ENCODE measurements at regions of chr2 and their contacts with region 1.

Region 1: DNA sequence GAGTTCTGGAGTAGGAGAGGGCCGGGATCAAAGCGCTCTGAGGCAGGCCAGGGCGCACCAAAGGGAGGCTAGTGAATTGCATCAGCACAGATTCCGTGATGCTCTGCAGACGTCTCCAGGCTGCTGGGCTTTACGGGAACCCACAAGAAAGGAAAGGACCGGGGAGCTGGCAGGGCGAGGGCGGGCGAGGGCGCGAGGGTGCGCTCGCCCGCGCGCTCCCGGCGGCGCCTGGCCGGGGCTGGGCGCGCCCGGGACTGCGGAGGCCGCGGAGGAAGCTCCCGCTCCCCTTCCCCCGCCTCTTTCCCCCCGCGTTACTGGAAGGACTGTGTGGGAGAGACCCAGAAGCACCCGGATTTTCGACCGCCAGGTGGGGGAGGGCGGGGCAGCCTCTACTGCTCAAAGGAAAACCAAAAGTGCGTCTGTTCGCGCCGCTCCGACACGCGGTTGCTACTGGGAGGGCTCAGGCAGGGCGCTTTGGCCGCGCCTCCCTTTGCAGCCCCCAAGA is 2.4 kb upstream of the FOSL2 start:
- DNase-seq: peak; percentile 79
- H3K27ac ChIP-seq: peak overlapping the region; percentile 100
- CTCF ChIP-seq: peak; percentile 32; the same call in 1 of the 2 replicates

Region 2: GRCh38 chr2:27779417-27780055 is 610.8 kb before region 1 on chr2:
- CTCF ChIA-PET with region 1: no interaction called
- POLR2A ChIA-PET with region 1: interaction called, 11 read pairs
- DNase-seq: no peak
- H3K27ac ChIP-seq: no peak overlapping the region
- CTCF ChIP-seq: no peak

Region 3: DNA sequence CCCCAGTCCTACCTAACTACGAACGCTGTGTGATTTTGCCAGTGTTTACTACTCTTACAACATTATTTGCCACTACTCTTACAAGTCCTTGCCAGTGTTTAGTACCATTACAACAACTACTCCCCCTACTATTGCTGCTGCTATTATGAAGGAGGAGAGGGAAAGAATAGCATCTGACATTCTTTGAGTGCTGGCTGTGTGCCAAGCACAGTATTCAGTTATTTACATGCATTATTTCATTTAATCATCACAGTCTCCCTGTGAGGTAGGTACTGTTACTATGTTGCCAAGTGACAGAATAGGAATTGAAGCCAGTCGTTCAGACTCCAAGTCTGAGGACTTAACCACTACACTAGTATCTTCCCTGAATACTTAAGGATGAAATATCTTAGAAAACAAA is 183.5 kb before region 1 on chr2:
- CTCF ChIA-PET with region 1: no interaction called
- POLR2A ChIA-PET with region 1: no interaction called
- DNase-seq: no peak
- H3K27ac ChIP-seq: no peak overlapping the region
- CTCF ChIP-seq: no peak

Region 4: DNA sequence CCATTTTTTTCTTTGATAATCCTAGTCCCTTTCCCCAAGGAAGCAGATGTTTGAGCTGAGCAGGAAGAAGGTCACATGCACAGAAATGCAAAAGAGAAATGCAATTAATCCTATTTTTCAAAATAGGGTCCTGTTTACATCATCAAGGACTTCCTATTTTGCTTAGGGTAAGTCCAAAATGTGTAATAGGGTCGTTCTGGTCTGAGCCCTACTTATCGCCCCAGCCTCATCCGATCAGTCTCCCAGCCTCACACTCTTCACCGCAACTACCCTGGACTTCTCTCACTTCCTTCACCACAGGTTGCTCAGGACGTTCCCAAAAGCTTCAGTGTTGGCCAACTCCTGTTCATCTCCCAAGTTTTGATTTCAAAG is 35.2 kb after region 1 on chr2:
- CTCF ChIA-PET with region 1: no interaction called
- POLR2A ChIA-PET with region 1: no interaction called
- DNase-seq: no peak
- H3K27ac ChIP-seq: no peak overlapping the region
- CTCF ChIP-seq: no peak